ENCODE measurements at regions of chr2 and their contacts with region 1.

Region 1: GRCh38 chr2:69789175-69789721 is 40.2 kb upstream of the GMCL1 start:
- DNase-seq: no peak
- ATAC-seq: peak in 7 of 8 donors; percentile 45 to 80 (median 61)
- H3K4me3 ChIP-seq: peak overlapping the region in 1 of 10 donors; percentile 10
- H3K27ac ChIP-seq: peak overlapping the region in 9 of 10 donors; percentile 32 to 84 (median 75)
- H3K4me1 ChIP-seq: peaks cover 0 to 25% (median 20%) of the 10 kb centered on the region in 9 donors
- H3K27me3 ChIP-seq: no peaks in the 10 kb centered on the region
- CTCF ChIP-seq: no peak

Region 2: DNA sequence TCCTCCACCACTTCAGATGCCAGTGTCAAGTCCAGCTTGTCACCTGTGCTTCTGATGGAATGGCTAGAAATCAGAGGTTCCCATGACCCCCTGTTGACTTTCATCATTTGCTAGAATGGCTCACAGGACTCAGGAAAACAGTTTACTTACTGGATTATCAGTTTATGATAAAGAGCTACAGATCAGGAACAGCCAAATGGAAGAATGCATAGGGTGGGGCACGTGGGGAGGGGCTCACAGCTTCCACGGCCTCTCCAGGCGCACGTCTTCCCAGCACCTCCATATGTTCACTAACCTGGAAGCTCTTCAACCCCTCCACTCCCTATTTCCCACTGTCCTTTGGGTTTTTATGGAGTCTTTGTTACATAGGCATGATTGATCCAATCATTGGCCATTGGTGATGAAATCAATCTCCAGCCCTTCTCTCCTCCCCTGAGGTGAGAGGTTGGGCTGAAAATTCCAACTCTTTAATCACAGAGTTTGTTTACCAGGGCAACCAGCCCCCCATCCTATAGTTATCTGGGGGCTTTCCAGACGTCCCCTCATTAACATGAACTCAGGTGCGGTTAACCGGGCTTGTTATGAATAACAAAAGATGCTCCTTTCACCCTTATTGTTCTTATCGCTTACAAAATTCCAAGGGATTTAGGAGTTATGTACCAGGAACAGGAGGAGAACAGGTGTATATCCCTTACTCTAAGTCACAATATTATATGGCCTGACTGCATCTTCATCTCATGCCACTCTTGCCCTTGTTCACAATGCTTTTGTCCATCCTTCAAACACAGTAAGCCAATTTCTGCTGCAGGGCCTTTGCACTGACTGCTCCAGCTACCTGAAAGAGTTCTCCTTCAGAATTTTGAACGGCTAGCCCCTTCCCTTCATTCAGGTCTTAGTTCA is 12.1 kb before region 1 on chr2:
- intact Hi-C with region 1: loop called in 1 of 10 experiments (anchors 1 kb)
- DNase-seq: no peak
- ATAC-seq: no peak
- H3K4me3 ChIP-seq: no peak overlapping the region
- H3K27ac ChIP-seq: no peak overlapping the region
- H3K4me1 ChIP-seq: peaks cover 0 to 25% (median 0%) of the 10 kb centered on the region in 9 donors
- H3K27me3 ChIP-seq: no peaks in the 10 kb centered on the region
- CTCF ChIP-seq: no peak